Activated CD4-positive, alpha-beta T cell treated with anti-CD3 and anti-CD28 coated beads for 36 hours (primary cell): ENCODE measurements at regions of chr14 and their contacts with region 1.

Region 1: GRCh38 chr14:53152890-53153701 is at the start of gene DDHD1:
- DNase-seq: peak; percentile 90
- ATAC-seq: peak; percentile 79
- H3K4me3 Mint-ChIP-seq: peak within 1 kb of the TSS; percentile 99
- H3K27ac Mint-ChIP-seq: peak within 1 kb of the TSS; percentile 99
- H3K4me1 Mint-ChIP-seq: peaks cover 34% of the 10 kb centered on the region
- H3K27me3 Mint-ChIP-seq: no peaks in the 10 kb centered on the region
- total RNA-seq, gene DDHD1: 34.7 to 36.2 TPM

Region 2: GRCh38 chr14:52706724-52707706 is 446.1 kb before region 1 on chr14 and contains the start of gene PSMC6:
- CTCF ChIA-PET with region 1: no interaction called
- POLR2A ChIA-PET with region 1: no interaction called
- intact Hi-C with region 1: loop called (anchors 5 to 10 kb)
- DNase-seq: peak; percentile 98
- ATAC-seq: peak; percentile 96
- H3K4me3 Mint-ChIP-seq: peak within 1 kb of the TSS; percentile 91
- H3K27ac Mint-ChIP-seq: peak within 1 kb of the TSS; percentile 92
- H3K4me1 Mint-ChIP-seq: peaks cover 41% of the 10 kb centered on the region
- H3K27me3 Mint-ChIP-seq: no peaks in the 10 kb centered on the region
- total RNA-seq, gene PSMC6: 87.0 to 121 TPM

Region 3: DNA sequence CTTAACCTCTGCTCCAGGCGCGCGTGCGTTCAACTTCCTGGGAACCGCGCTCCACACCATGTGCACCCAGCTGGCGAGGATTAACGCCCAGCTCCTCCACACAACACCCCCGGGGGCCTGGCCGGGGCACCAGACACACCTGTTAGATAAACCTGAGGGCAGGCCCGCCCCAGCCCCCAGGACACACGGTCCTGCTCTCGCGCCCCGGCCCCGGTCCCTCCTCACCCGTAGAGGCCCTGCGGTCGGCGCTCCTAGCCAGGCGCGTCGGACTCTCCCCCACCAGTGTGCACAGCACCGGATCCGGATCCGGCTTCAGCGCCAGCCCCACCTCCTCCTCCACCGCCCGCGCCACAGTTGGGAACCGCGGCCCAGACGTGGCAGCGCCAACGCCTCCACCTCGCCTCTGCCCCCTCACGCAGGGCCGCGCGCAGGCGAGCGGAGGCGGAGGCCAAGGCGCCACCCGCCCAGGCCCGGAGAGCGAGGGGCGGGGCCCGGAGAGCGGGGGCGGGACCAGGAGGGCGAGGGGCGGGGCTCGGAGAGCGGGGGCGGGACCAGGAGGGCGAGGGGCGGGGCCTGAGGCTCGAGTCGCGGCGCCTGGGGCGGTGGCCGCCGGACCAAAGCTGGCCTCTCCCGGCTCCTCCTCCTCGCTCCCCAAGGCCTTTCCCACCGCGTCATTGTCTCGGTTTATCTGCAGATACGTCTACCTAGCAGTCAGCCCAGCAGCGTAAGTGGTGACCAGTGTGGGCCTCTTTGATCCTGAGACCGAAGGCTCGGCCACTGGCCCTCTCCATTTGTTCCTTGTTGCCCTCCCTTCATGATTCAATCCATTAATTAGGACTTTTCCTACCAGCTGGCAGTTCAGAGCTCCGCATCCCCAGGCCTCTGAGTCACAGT is 361.6 kb before region 1 on chr14 and contains the start of gene GNPNAT1:
- CTCF ChIA-PET with region 1: no interaction called
- POLR2A ChIA-PET with region 1: no interaction called
- intact Hi-C with region 1: loop called (anchors 1 to 10 kb)
- DNase-seq: peak; percentile 90
- ATAC-seq: peak; percentile 91
- H3K4me3 Mint-ChIP-seq: peak within 1 kb of the TSS; percentile 95
- H3K27ac Mint-ChIP-seq: peak within 1 kb of the TSS; percentile 80
- H3K4me1 Mint-ChIP-seq: peaks cover 33% of the 10 kb centered on the region
- H3K27me3 Mint-ChIP-seq: no peaks in the 10 kb centered on the region
- total RNA-seq, gene GNPNAT1: 31.1 to 33.6 TPM

Region 4: DNA sequence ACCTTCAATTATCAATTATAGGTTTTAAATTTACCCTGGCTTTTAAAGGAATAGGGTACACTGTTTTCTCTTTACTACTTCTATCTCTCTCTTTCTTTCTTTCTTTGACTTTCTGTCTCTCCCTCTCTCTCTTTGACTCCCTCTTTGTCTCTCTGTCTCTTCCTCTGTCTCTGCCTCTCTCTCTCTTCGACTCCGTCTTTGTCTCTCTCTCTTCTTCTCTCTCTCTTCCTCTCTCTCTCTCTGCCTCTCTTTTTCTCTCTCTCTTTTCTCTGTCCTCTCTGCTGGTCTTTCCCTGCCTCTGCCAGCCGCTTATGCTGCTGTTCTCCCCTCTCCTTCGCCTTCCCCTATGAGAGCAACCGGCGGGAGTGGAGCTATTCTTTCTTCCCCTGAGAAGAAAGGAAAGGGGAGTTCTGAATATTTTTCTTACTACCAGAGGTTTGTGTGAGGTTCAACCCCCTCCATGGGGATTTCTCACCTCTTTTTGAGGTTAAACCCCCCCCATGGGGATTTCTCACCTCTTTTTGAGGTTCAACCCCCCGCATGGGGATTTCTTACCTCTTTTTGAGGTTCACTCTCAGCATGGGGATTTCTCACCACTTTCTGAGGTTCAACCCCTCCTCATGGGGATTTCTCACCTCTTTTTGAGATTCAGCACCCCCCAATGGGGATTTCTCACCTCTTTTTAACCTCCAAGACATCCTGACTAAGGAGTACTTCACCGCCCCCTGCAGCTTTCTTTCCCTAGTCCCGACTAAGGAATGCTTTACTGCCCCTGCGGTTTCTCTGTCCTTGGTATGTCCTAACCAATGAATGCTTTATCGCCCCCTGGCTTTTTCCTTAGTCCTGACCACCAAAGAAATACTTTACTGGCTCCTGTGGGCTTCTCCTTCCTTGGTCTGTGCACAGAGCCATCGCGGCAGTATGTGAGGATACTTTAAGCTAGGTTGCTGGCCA is 27.4 kb after region 1 on chr14:
- CTCF ChIA-PET with region 1: no interaction called
- POLR2A ChIA-PET with region 1: interaction called, 5 read pairs
- intact Hi-C with region 1: loop called (anchors 1 kb)
- DNase-seq: peak; percentile 61
- ATAC-seq: peak; percentile 73
- H3K4me3 Mint-ChIP-seq: no peak overlapping the region
- H3K27ac Mint-ChIP-seq: peak overlapping the region; percentile 71
- H3K4me1 Mint-ChIP-seq: peaks cover 39% of the 10 kb centered on the region
- H3K27me3 Mint-ChIP-seq: peaks cover 2% of the 10 kb centered on the region

Region 5: DNA sequence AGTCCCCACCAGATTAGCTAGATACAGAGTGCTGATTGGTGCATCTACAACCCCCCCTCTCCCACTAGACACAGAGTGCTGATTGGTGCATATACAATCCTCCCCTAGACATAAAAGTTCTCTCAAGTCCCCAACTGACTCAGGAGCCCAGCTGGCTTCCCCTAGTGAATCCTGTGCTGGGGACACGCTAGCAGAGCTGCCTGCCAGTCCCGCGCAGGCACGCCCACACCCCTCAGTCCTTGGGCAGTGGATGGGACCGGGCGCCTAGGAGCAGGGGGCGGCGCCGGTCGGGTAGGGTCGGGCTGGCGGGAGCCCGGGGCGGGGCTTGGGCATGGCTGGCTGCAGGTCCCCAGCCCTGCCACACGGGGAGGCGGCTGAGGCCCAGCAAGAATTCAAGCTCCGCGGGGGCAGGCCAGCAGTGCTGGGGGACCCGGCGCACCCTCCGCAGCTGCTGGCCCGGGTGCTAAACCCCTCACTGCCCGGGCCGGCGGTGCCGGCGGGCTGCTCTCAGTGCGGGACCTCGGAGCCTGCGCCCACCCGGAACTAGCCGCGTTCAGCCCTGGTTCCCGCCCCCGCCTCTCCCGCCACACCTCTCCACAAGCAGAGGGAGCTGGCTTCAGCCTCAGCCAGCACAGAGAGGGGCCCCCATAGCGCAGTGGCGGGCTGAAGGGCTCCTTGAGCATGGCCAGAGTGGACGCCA is 64.3 kb after region 1 on chr14:
- CTCF ChIA-PET with region 1: interaction called, 4 read pairs
- POLR2A ChIA-PET with region 1: interaction called, 6 read pairs
- intact Hi-C with region 1: loop called in 1 of 2 experiments (anchors 1 kb)
- DNase-seq: peak; percentile 90
- ATAC-seq: peak; percentile 98
- H3K4me3 Mint-ChIP-seq: peak overlapping the region; percentile 74
- H3K27ac Mint-ChIP-seq: peak overlapping the region; percentile 83
- H3K4me1 Mint-ChIP-seq: peaks cover 5% of the 10 kb centered on the region
- H3K27me3 Mint-ChIP-seq: no peaks in the 10 kb centered on the region